AG04450 (cell line): ENCODE measurements at regions of chr3 and their contacts with region 1.

Region 1: DNA sequence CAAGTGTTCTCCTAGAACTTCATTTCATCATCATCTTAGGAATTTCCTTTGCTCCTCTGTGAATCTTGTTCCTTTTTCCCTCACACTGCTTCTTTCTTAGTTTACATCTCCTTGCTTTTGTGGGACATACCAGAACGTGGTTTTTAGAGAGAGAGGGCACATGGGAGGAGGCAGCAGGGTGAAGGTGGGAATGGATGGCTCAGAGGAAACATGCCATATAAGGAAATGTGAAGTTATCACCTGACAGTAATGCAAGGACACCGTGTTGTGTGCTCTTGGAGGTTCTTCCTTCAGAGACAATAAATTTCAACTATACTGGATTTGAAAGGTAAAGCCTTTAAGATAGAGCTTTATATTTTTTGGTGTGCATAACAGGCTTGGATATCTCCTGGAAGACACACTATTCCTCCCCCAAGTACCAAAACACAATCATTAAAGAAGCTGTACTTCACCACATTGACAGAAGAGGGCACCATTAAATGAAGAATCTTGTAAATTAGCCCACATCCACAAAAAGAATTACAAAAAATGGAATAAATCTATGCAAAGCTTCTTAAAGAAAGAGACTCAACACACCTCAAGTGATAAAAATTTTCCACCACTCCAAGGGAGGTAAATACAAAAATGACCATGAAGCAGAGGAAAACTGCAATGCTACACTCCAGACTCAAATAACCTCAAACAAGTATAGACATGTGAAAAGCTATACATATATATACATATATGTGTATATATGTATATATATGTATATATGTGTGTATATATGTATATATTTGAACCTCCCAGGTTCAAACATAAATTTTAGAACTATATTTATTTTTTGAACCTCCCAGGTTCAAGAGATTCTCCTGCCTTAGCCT is 26.1 kb downstream of the RPL39L start:
- DNase-seq: no peak
- H3K4me3 ChIP-seq: no peak overlapping the region
- H3K27ac ChIP-seq: no peak overlapping the region
- H3K27me3 ChIP-seq: no peaks in the 10 kb centered on the region
- CTCF ChIP-seq: peak; percentile 61

Region 2: GRCh38 chr3:186760897-186761447 is 352.2 kb before region 1 on chr3:
- CTCF ChIA-PET with region 1: no interaction called
- POLR2A ChIA-PET with region 1: no interaction called
- DNase-seq: no peak
- H3K4me3 ChIP-seq: no peak overlapping the region
- H3K27ac ChIP-seq: no peak overlapping the region
- H3K27me3 ChIP-seq: no peaks in the 10 kb centered on the region
- CTCF ChIP-seq: no peak

Region 3: DNA sequence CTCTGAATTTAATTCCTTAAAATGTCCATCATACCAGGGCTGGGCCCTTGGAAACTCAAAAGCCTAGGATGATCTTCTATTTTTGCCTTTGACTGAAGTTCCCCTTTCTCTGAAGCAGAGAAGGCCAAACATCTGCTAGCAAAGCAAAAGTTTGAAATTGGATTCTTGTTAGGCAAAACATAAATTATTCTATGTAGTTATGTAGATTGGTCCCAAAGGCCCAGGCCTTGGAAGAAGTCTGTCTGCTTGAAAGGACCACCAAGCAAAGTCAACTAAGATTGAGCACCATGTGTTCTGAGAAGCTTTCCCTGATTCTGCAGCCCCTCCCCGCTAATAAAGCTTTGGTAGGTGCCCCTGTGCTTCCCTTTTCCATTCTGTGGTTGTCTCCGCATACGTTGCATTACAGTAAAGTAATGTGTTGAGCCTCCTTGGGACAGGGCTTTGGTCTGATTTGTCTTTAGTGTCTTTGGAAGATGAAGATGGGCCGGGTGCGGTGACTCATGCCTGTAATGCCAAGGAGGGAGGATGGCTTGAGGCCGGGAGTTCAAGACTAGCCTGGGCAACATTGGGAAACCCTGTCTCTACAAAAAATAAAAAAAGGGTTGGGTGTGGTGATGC is 30.3 kb before region 1 on chr3:
- CTCF ChIA-PET with region 1: interaction called, 13 read pairs
- POLR2A ChIA-PET with region 1: no interaction called
- DNase-seq: no peak
- H3K4me3 ChIP-seq: no peak overlapping the region
- H3K27ac ChIP-seq: no peak overlapping the region
- H3K27me3 ChIP-seq: no peaks in the 10 kb centered on the region
- CTCF ChIP-seq: no peak

Region 4: DNA sequence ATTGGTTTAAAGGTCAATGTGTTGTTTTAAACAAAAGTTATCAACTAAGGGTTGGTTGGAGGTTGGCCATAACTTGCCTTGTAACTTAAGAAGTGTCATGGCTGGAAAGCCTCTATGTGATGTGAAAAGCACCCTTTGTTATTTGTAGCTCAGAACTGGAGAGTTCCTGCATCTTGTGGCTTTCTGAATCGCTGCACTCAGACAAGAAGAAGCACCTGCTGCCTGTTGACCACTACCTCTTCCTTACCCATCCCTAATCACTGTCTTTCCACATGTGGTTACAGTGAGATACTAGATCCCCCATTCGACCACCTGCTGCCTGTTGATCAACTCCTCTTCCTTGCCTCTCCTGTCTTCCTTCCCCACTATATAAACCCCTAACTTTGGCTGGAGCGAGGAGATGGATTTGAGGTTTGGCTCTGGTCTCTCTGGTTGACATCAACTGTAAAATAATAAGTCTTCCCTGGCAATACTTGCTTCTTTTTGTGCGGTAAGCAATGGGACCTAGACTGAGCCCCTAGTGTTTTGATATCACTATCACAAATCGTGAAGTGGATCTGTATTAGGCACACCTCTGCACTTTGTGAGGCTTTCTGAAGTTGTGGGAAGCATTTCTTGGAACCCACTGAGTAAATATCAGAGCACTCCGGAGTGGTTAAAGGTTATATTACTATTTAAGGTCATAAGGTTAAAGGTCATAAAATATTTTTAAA is 12.3 kb after region 1 on chr3:
- CTCF ChIA-PET with region 1: interaction called, 30 read pairs
- POLR2A ChIA-PET with region 1: no interaction called
- DNase-seq: no peak
- H3K4me3 ChIP-seq: no peak overlapping the region
- H3K27ac ChIP-seq: no peak overlapping the region
- H3K27me3 ChIP-seq: no peaks in the 10 kb centered on the region
- CTCF ChIP-seq: no peak

Region 5: DNA sequence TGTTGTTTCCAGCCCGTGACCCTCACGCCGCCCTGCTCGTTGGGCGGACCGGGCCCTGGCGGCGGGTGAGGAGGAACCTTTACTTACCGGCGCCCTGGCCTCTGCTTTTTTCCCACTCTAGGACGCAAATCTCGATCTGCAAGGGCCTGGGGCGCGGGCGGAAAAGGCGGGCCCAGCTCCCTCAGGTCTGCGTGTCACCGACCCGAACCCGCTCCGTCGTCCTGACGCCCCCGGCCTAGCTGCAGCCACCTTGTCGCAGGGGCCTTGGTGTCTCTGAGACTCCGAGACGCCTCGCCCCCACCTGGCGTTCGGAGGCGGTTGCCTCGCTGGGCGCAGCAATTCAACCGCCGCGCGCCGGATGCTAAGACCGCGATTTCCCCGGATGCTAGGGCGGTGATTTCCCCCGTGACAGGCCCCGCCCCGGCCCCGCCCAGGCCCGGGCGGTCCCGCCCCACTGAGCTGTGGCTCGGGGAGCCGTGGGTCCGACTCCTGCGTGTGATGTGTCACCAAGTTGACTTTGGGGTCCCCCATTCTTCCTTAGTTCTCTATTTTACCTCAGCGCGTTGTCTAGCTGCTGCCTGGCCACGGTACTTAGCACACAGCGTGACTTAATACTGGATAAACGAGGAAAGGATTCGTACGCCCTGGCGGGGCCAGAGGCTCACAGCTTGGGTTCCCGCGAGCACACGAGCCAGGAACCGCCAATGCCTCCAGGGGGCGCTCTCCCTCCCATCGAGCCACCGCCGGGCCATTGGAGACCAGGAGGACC is 26.1 kb after region 1 on chr3 and contains the start of gene RPL39L:
- CTCF ChIA-PET with region 1: interaction called, 40 read pairs
- POLR2A ChIA-PET with region 1: no interaction called
- DNase-seq: peak; percentile 45
- H3K4me3 ChIP-seq: peak within 1 kb of the TSS; percentile 79
- H3K27ac ChIP-seq: peak within 1 kb of the TSS; percentile 57
- H3K27me3 ChIP-seq: peaks cover 9% of the 10 kb centered on the region
- CTCF ChIP-seq: peak; percentile 96
- polyA plus RNA-seq, gene RPL39L: 14.4 and 17.0 TPM in 2 replicates